GM12878 (cell line): ENCODE measurements at regions of chr3 and their contacts with region 1.

Region 1: GRCh38 chr3:17151598-17152373 is 267.0 kb downstream of the PLCL2 start:
- DNase-seq: peak; percentile 92
- ATAC-seq: peak; percentile 96
- H3K4me3 ChIP-seq: 0 out of 2 replicates have a peak overlapping the region, but pooled peaks have one; percentile 1
- H3K27ac ChIP-seq: peak overlapping the region; percentile 76
- H3K4me1 ChIP-seq: peaks cover 25% of the 10 kb centered on the region
- H3K27me3 ChIP-seq: no peaks in the 10 kb centered on the region
- CTCF ChIP-seq: 0 out of 6 replicates have a peak, but pooled peaks of 1 of the 3 experiments have one; percentile 1
- EP300 ChIP-seq: peak; percentile 73 to 82
- POLR2A ChIP-seq: peak; percentile 67; the same call in 1 of the 2 replicates
- RAD21 ChIP-seq: peak; percentile 32

Region 2: GRCh38 chr3:16828815-16829214 is 323.0 kb before region 1 on chr3:
- CTCF ChIA-PET with region 1: interaction called, 4 read pairs
- POLR2A ChIA-PET with region 1: no interaction called
- RAD21 ChIA-PET with region 1: interaction called, 4 read pairs
- SMC1A ChIA-PET with region 1: interaction called, 12 read pairs
- in situ Hi-C with region 1: no loop called
- intact Hi-C with region 1: no loop called
- DNase-seq: no peak
- ATAC-seq: peak; percentile 90
- H3K4me3 ChIP-seq: no peak overlapping the region
- H3K27ac ChIP-seq: no peak overlapping the region
- H3K4me1 ChIP-seq: peaks cover 8% of the 10 kb centered on the region
- H3K27me3 ChIP-seq: no peaks in the 10 kb centered on the region
- CTCF ChIP-seq: peak; percentile 58 to 65 (median 60)
- EP300 ChIP-seq: no peak
- POLR2A ChIP-seq: no peak
- RAD21 ChIP-seq: peak; percentile 93

Region 3: DNA sequence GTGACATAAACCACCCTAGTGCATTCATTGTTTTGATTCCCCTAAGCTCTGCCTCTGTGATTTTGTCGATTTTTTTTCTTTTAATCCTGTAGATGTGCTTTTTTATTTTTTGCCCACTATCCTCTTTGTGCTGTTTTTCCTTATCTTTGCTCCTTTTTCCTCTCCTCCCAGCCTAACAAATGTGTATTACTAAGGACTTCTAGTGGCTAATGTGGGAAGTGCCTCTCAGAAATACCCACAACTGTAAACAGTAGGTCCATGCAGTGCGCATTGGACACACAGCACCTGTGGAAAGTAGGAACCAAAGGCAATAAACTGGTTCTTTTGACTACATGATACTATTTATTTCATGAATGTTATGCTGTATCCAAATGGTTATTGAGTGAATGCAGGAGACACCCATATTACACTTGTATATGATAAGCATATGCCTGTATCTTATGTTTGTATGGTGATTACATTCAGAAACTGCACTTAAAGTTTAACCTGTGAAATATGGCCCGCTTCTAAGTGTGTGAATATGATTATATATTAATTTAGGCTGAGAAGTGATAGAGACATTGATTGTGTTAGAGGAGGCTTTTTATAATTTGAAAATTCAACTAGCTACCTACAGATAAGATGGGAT is 119.3 kb before region 1 on chr3:
- CTCF ChIA-PET with region 1: interaction called, 4 read pairs
- POLR2A ChIA-PET with region 1: no interaction called
- RAD21 ChIA-PET with region 1: interaction called, 5 read pairs
- SMC1A ChIA-PET with region 1: interaction called, 16 read pairs
- in situ Hi-C with region 1: no loop called
- intact Hi-C with region 1: no loop called
- DNase-seq: no peak
- ATAC-seq: peak; percentile 81
- H3K4me3 ChIP-seq: no peak overlapping the region
- H3K27ac ChIP-seq: no peak overlapping the region
- H3K4me1 ChIP-seq: peaks cover 15% of the 10 kb centered on the region
- H3K27me3 ChIP-seq: no peaks in the 10 kb centered on the region
- CTCF ChIP-seq: peak; percentile 54 to 64 (median 54); a peak in 5 of 6 replicates
- EP300 ChIP-seq: no peak
- POLR2A ChIP-seq: no peak
- RAD21 ChIP-seq: peak; percentile 76

Region 4: DNA sequence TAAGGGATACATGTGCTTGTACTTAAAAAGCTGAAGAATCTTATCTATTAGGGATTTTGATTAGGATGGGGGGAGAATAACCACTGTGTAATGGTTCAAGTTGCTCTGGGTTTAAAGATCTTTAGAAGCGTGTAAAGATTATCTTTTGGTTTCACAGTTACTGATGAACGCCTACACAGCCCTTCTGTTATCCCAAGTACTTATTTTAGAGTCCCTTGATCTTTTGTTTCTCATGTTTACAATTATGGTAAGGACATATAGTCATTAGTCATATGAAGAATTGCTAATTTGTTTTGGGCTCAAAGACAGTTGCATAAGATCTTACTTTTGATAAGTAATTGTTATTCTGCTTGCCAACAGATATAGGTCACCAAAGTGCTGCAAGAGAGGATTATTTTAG is 106.9 kb before region 1 on chr3:
- CTCF ChIA-PET with region 1: interaction called, 5 read pairs
- POLR2A ChIA-PET with region 1: no interaction called
- RAD21 ChIA-PET with region 1: interaction called, 14 read pairs
- SMC1A ChIA-PET with region 1: interaction called, 4 read pairs
- in situ Hi-C with region 1: no loop called
- intact Hi-C with region 1: loop called (anchors 5 kb)
- DNase-seq: no peak
- ATAC-seq: peak; percentile 84
- H3K4me3 ChIP-seq: no peak overlapping the region
- H3K27ac ChIP-seq: peak overlapping the region; percentile 72
- H3K4me1 ChIP-seq: peaks cover 38% of the 10 kb centered on the region
- H3K27me3 ChIP-seq: no peaks in the 10 kb centered on the region
- CTCF ChIP-seq: no peak
- EP300 ChIP-seq: peak; percentile 85 to 87; a peak in 3 of 4 replicates
- POLR2A ChIP-seq: no peak
- RAD21 ChIP-seq: 0 out of 2 replicates have a peak, but pooled peaks have one; percentile 5

Region 5: GRCh38 chr3:17055374-17056276 is 96.2 kb before region 1 on chr3:
- CTCF ChIA-PET with region 1: no interaction called
- POLR2A ChIA-PET with region 1: interaction called, 7 read pairs
- RAD21 ChIA-PET with region 1: interaction called, 4 read pairs
- SMC1A ChIA-PET with region 1: interaction called, 4 read pairs
- in situ Hi-C with region 1: no loop called
- intact Hi-C with region 1: loop called (anchors 5 kb)
- DNase-seq: peak; percentile 90
- ATAC-seq: peak; percentile 79
- H3K4me3 ChIP-seq: no peak overlapping the region
- H3K27ac ChIP-seq: peak overlapping the region; percentile 97
- H3K4me1 ChIP-seq: peaks cover 34% of the 10 kb centered on the region
- H3K27me3 ChIP-seq: no peaks in the 10 kb centered on the region
- CTCF ChIP-seq: no peak
- EP300 ChIP-seq: peak; percentile 73 to 88
- POLR2A ChIP-seq: no peak
- RAD21 ChIP-seq: peak; percentile 16; the same call in 1 of the 2 replicates

Region 6: DNA sequence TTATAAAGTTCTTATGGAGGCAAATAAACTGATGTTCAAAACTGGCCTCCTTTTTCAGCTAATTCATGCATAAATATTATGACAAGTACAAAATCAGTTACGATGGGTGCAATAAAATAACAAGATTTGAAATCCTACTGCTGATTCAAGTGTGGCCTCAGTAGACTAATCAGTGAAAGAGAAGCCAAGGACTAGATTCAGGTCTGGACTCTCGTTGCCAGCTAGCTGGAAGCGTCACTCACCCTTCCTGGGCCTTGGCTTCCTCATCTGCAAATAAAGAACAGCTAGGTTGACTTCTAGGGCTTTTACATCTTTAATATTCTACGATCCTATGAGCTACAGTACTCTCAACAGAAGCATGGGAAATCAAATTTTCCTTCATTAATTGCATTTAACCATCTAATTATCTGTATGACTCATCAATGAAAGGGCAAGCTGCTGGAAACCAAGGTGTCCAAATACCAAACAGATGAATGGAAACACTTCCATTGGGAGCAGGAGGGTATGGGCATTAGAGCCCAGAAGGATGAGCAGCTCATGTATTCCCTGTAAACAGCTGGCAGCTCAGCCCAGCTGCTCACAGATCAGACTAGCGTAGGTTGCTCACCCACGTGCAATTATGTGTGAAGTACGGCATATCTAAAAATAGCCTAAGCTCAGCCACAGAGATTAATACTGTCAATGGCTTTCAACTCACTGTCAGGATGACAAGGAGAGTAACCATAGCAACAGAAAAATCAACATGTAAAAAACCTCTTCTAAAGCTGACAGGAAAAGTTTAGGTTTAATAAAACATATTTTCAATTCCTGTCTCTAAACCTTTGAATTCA is 27.8 kb after region 1 on chr3:
- CTCF ChIA-PET with region 1: interaction called, 12 read pairs
- POLR2A ChIA-PET with region 1: interaction called, 6 read pairs
- RAD21 ChIA-PET with region 1: interaction called, 40 read pairs
- SMC1A ChIA-PET with region 1: interaction called, 51 read pairs
- in situ Hi-C with region 1: no loop called
- intact Hi-C with region 1: loop called (anchors 2 kb)
- DNase-seq: peak; percentile 56
- ATAC-seq: peak; percentile 84
- H3K4me3 ChIP-seq: no peak overlapping the region
- H3K27ac ChIP-seq: no peak overlapping the region
- H3K4me1 ChIP-seq: peaks cover 38% of the 10 kb centered on the region
- H3K27me3 ChIP-seq: no peaks in the 10 kb centered on the region
- CTCF ChIP-seq: no peak
- EP300 ChIP-seq: peak; percentile 82 to 97
- POLR2A ChIP-seq: no peak
- RAD21 ChIP-seq: no peak

Region 7: GRCh38 chr3:17190353-17191078 is 38.7 kb after region 1 on chr3:
- CTCF ChIA-PET with region 1: interaction called, 13 read pairs
- POLR2A ChIA-PET with region 1: interaction called, 10 read pairs
- RAD21 ChIA-PET with region 1: interaction called, 64 read pairs
- SMC1A ChIA-PET with region 1: interaction called, 51 read pairs
- in situ Hi-C with region 1: no loop called
- intact Hi-C with region 1: no loop called
- DNase-seq: no peak
- ATAC-seq: 0 out of 3 replicates have a peak, but pooled peaks have one; percentile 12
- H3K4me3 ChIP-seq: no peak overlapping the region
- H3K27ac ChIP-seq: no peak overlapping the region
- H3K4me1 ChIP-seq: peaks cover 23% of the 10 kb centered on the region
- H3K27me3 ChIP-seq: no peaks in the 10 kb centered on the region
- CTCF ChIP-seq: no peak
- EP300 ChIP-seq: no peak
- POLR2A ChIP-seq: no peak
- RAD21 ChIP-seq: no peak